Activated naive CD4-positive, alpha-beta T cell treated with anti-CD3 and anti-CD28 coated beads for 36 hours (primary cell): ENCODE measurements at regions of chr12 and their contacts with region 1.

Region 1: DNA sequence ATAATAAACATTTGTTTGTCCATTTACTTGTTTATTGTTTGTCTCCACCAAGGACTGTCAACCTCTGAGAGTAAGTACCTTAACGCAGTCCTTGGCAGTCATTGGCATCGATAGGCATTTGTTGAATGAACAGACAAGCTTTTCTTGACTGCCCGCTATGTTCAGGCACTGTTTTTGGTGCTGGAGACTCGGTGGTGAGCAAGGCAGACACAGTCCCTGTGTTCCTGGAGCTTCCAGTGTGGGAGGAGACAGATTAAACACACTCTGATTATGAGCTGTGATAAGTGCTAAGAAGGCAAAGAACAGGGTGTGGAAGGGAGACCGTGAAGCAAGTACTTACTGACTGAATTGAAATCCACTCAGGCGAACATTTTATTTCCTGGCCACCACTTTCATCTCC is 1.2 kb downstream of the ATP6V0A2 start:
- DNase-seq: peak; percentile 26
- H3K4me3 Mint-ChIP-seq: peak overlapping the region; percentile 80
- H3K27ac Mint-ChIP-seq: peak overlapping the region; percentile 83
- H3K4me1 Mint-ChIP-seq: peaks cover 42% of the 10 kb centered on the region
- H3K27me3 Mint-ChIP-seq: no peaks in the 10 kb centered on the region

Region 2: DNA sequence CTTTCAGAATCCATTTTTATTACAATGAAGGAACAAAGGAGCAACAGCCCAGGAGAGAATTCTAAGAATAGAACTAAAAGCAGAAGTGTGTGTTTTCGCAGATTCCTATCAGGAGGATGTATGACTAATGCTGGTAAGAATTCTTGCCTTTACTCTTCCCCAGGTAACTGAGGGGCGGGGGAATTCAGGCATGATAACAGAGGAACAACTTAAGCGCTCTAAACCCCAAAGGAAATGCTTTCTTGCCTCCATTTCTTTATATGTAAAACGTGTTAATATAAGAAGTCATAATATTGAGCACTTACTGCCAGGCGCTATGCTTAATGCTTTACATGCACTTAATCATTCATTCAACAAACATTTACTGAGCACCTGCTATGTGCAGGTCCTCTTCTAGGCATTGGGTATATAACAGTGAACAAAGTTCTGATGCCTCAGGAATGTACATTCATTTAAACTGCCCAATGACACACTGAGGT is 987.3 kb before region 1 on chr12:
- CTCF ChIA-PET with region 1: no interaction called
- intact Hi-C with region 1: loop called (anchors 5 kb)
- DNase-seq: peak; percentile 61
- H3K4me3 Mint-ChIP-seq: peak overlapping the region; percentile 50
- H3K27ac Mint-ChIP-seq: peak overlapping the region; percentile 85
- H3K4me1 Mint-ChIP-seq: peaks cover 76% of the 10 kb centered on the region
- H3K27me3 Mint-ChIP-seq: no peaks in the 10 kb centered on the region

Region 3: GRCh38 chr12:123232807-123233543 is 480.4 kb before region 1 on chr12 and contains the starts of genes MPHOSPH9 and MTRFR:
- CTCF ChIA-PET with region 1: no interaction called
- intact Hi-C with region 1: loop called (anchors 10 kb)
- DNase-seq: peak; percentile 100
- H3K4me3 Mint-ChIP-seq: peak within 1 kb of the TSS; percentile 96
- H3K27ac Mint-ChIP-seq: peak within 1 kb of the TSS; percentile 99
- H3K4me1 Mint-ChIP-seq: peaks cover 58% of the 10 kb centered on the region
- H3K27me3 Mint-ChIP-seq: no peaks in the 10 kb centered on the region
- total RNA-seq, gene MPHOSPH9: 111 to 114 TPM
- total RNA-seq, gene MTRFR: 27.7 to 27.8 TPM

Region 4: GRCh38 chr12:123436017-123436964 is 277.1 kb before region 1 on chr12 and contains the start of gene RILPL2:
- CTCF ChIA-PET with region 1: no interaction called
- intact Hi-C with region 1: loop called (anchors 10 kb)
- DNase-seq: peak; percentile 97
- H3K4me3 Mint-ChIP-seq: peak within 1 kb of the TSS; percentile 92
- H3K27ac Mint-ChIP-seq: peak within 1 kb of the TSS; percentile 93
- H3K4me1 Mint-ChIP-seq: peaks cover 43% of the 10 kb centered on the region
- H3K27me3 Mint-ChIP-seq: no peaks in the 10 kb centered on the region
- total RNA-seq, gene RILPL2: 8.1 to 9.1 TPM

Region 5: DNA sequence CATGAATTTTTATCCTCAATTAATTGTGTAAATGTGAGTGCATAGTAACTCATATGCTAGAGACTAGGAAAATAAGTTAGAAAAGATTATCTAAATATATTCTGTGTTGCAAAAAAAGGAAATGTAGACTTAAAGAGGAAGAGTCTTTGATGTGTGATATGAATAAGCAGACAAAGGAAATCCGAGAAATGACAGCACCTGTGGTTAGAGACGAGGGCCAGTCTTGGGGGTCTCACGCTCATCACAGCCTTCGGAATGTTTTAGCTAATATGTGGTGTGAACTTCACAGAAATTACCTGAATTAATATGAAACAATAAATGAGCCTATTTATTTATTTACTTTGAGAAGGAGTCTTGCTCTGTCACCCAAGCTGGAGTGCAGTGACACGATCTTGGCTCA is 10.4 kb after region 1 on chr12:
- CTCF ChIA-PET with region 1: interaction called, 3 read pairs
- intact Hi-C with region 1: loop called (anchors 1 kb)
- DNase-seq: peak; percentile 26
- H3K4me3 Mint-ChIP-seq: no peak overlapping the region
- H3K27ac Mint-ChIP-seq: no peak overlapping the region
- H3K4me1 Mint-ChIP-seq: peaks cover 26% of the 10 kb centered on the region
- H3K27me3 Mint-ChIP-seq: no peaks in the 10 kb centered on the region

Region 6: GRCh38 chr12:123787466-123787865 is 74.1 kb after region 1 on chr12:
- CTCF ChIA-PET with region 1: no interaction called
- intact Hi-C with region 1: no loop called
- DNase-seq: no peak
- H3K4me3 Mint-ChIP-seq: no peak overlapping the region
- H3K27ac Mint-ChIP-seq: no peak overlapping the region
- H3K4me1 Mint-ChIP-seq: no peaks in the 10 kb centered on the region
- H3K27me3 Mint-ChIP-seq: no peaks in the 10 kb centered on the region

Region 7: DNA sequence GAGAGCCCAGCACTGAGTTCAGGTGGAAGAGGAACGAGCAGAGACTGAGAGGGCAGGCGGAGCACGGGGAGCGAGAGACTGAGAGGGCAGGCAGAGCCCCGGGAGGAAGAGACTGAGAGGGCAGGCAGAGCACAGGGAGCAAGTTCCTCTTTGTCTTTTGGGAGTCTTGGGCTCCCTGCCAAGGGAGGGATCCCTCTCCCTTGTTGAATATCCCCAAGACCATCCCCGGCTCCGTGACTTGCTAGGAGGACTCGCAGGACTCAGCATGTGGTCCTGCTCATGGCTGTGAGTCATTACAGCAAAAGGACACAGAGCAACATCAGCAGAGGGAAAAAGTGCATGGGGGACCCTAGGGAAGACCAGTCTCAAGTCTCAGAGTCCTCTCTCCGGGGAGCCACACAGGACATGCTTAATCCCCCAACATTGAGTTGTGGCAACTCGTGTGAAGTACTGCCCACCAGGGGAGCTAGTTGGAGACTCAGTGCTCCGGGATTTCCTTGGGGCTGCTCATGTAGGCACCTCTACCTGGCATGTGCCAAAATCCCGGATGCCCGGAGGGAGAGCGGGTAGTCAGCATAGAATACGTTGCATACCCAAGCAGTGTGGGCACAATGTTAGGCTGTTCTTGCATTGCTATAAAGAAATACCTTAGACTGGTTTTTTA is 178.2 kb after region 1 on chr12:
- CTCF ChIA-PET with region 1: no interaction called
- intact Hi-C with region 1: no loop called
- DNase-seq: no peak
- H3K4me3 Mint-ChIP-seq: no peak overlapping the region
- H3K27ac Mint-ChIP-seq: no peak overlapping the region
- H3K4me1 Mint-ChIP-seq: no peaks in the 10 kb centered on the region
- H3K27me3 Mint-ChIP-seq: no peaks in the 10 kb centered on the region

Region 8: DNA sequence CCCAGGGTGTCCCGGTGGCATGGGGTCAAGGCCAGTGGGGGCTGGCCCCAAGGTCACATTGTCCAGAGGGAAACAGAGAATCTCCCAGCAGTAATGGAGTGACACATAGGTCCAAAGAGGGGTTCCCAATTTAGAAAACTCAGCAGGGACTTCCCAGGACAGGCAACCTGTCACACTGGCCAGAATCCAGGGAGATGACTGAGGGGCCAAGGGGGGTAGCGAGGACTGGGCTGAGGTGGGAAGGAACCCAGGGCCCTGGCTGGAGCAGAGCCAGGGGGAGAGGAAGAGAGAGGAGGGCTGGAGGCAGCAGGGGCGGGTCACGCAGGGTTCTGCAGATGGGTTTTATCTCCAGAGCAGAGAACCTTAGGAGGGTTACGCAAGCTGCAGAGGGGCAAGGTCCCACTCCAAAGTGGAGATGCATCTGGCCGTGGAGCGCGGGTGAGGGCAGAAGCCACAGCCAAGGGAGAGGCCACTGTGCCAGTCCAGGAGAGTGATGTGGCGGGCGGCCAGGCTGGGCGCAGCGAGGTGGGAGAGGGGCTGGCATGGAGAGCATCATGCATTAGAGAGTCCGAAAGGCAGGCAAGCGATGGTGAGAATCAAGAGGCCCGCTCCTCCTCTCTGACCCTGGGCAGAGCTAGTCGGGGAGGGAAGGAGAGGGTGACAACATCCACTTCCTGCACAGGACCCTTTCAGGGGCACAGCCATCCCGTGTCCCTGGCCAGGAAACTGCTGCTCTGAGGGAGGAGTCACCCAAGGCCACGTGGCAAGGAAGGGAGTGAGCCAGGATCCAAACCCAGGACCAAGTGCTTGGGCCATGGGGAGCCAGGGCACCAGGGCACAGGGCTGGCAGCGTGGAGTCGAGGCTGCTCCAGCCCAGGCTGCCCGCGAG is 825.0 kb after region 1 on chr12:
- CTCF ChIA-PET with region 1: no interaction called
- intact Hi-C with region 1: no loop called
- DNase-seq: no peak
- H3K4me3 Mint-ChIP-seq: no peak overlapping the region
- H3K27ac Mint-ChIP-seq: no peak overlapping the region
- H3K4me1 Mint-ChIP-seq: peaks cover 35% of the 10 kb centered on the region
- H3K27me3 Mint-ChIP-seq: no peaks in the 10 kb centered on the region

Region 9: DNA sequence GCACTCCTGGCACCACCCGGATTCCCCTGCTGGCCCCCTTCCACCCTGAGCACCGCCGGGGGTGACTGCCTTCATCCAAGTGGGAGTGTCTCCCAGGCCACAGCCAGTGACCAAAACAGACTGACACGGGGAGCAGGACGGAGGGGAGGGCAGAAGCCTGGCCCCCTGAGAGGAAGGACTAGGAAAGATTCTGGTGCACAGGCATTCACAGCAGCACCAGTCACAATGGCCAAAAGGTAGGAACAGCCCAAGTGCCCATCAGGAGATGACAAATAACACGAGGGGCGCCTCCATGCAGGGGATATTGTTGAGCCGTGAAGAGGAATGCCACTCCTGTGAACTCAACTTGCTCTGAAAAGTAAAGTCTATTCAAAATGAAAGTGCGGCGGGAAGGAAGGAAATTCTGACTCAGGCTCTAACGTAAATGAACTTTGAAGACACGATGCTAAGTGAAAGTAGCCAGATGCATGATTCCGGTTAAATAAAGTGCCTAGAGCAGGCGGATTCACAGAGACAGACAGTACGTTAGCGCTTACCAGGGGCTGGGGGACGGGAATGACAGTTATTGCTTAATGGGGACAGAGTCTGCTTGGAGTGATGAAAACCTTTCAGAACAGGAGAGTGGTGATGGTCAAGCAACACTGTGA is 1000.2 kb after region 1 on chr12:
- CTCF ChIA-PET with region 1: no interaction called
- intact Hi-C with region 1: loop called (anchors 2 kb)
- DNase-seq: peak; percentile 92
- H3K4me3 Mint-ChIP-seq: peak overlapping the region; percentile 0
- H3K27ac Mint-ChIP-seq: peak overlapping the region; percentile 64
- H3K4me1 Mint-ChIP-seq: peaks cover 21% of the 10 kb centered on the region
- H3K27me3 Mint-ChIP-seq: no peaks in the 10 kb centered on the region